Panc1 (cell line): ENCODE measurements at regions of chr7 and their contacts with region 1.

Region 1: DNA sequence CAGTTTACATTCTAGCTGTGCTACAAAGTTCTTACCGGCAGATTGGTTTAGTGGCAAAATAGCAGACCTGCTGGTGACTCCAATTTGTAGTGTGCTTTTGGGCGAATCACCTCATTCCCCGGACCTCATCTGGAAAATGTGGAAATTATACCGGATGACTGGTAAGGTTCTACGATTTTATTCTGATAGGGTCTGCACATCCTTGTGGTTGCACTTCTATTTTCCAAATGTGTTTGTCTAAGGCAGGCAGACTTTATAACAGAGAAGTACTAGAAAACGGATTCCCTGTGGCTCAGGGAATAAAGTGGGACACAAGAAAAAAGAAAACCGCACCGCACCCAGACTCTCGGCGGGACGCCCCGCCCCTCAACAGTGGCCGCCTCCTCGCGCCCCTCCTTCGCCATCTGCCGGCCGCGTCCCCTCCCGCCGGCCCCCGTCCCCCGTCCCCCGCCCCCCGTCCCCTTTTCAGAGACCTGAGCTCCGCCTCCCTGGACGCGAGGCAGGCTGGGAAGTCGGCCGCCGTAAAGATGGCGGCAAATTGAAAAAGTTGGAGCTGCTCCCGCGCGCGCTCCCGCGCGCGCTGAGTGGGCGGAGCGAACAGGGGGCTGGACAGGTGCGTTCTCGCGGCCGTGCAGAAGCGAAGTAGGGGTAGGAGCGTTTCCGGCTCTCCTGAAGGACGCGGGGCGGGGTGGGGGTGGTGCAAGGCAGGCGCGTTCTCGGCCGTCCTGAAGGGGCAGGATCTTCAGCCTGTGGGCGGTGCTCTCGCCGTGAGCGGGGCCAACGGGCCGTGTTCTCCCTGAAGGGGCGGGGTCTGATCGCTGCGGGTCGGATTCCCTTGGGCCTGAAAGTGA is 531 bp upstream of the CCM2 start:
- DNase-seq: peak; percentile 98
- ATAC-seq: peak; percentile 98
- H3K4me3 ChIP-seq: peak overlapping the region; percentile 73 to 84
- H3K27ac ChIP-seq: peak overlapping the region; percentile 96
- H3K4me1 ChIP-seq: peaks cover 9% of the 10 kb centered on the region
- H3K27me3 ChIP-seq: no peaks in the 10 kb centered on the region
- CTCF ChIP-seq: no peak

Region 2: GRCh38 chr7:44572771-44573170 is 426.7 kb before region 1 on chr7:
- CTCF ChIA-PET with region 1: no interaction called
- POLR2A ChIA-PET with region 1: interaction called, 10 read pairs
- in situ Hi-C with region 1: no loop called
- intact Hi-C with region 1: no loop called
- DNase-seq: no peak
- ATAC-seq: no peak
- H3K4me3 ChIP-seq: peak overlapping the region; percentile 91 to 94
- H3K27ac ChIP-seq: peak overlapping the region; percentile 96
- H3K4me1 ChIP-seq: peaks cover 17% of the 10 kb centered on the region
- H3K27me3 ChIP-seq: no peaks in the 10 kb centered on the region
- CTCF ChIP-seq: no peak

Region 3: DNA sequence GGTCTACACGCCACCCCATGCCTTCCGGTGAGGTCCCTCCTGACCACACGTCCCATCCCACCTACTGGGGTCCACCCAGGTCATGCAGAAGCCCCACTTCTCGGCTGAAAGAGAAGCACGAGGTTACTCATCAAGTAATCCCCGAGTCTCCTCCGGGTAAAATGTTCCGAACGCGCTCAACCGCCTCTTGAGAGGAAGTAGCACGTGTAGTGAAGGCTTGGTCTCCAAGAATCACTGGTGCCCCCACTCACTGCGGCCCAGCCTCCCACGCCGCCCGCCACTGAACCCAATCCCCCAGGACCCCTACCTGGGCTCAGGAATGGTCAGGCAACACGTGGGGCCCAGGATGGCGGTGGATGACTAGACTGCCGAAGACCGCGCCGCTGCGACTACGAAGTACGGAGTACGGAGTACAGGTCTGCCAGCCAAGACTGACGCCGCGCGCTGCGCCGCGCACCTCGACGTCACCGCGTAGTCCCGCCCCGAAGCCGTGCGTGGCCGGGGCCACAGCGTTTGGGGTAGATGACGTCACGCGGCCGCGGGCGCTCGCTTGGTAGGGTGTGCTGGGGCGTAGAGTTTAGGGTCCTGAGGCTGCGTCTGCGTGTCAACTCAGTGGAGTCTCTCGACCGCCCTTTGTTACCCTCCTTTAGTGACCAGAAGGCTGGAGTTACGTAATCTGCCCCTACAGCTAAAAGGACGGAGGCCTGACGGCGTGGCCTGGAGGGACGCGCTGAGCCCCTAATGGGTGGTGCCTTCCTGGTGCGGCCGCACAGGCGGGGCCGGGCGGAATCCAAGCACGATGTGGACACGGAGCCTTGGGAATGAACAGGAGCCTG is 13.0 kb before region 1 on chr7:
- CTCF ChIA-PET with region 1: interaction called, 13 read pairs
- POLR2A ChIA-PET with region 1: interaction called, 9 read pairs
- in situ Hi-C with region 1: no loop called
- intact Hi-C with region 1: no loop called
- DNase-seq: peak; percentile 86
- ATAC-seq: peak; percentile 99
- H3K4me3 ChIP-seq: peak overlapping the region; percentile 82 to 84
- H3K27ac ChIP-seq: peak overlapping the region; percentile 96
- H3K4me1 ChIP-seq: peaks cover 27% of the 10 kb centered on the region
- H3K27me3 ChIP-seq: no peaks in the 10 kb centered on the region
- CTCF ChIP-seq: no peak